ENCODE measurements at regions of chr10 and their contacts with region 1.

Region 1: DNA sequence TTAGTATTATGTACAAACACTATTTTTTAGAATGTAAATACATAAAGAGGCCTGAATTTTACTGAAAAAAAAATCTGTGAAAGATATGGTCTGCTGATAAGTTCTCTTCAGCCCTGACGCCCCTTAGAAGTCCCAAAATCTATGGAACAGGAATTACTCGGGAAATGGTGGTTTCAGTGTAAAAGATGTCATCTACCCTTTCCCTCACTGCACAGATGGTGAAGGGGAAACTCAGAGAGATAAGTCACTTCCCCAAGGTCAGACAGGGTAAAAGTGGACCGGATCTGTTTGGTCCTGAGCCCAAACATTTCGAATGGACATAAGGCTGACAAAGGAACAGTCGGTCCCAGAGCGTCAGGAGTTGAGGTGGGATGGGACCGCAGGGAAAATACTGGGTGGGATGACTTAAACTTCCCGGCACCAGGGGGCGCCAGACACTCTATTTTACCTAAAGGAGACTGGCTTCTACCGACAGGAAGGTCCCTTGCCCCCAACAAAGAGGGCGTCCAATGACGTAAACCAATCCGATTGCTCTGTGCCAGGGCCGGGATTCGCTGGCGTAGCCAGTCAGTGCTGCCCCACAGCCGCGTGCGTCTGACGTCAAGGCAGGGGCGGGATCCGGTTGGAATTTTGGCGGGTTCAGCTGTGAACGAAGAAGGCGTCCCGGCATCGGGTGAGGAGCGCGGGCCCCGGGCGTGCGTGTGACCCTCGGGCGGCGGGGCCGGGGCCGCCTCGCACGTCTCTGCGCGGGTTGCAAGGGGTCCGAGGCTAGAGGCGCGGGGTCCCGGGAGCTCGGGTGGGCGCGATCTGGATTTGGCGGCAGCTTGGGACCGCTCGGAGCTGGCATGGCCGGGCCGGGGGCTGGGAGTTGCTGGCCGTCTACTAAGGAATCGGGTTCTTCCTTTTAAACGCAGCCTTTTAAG is at the start of gene MCM10:
- DNase-seq: peak; percentile 99
- H3K4me3 ChIP-seq: peak within 1 kb of the TSS; percentile 40 to 54
- H3K27ac ChIP-seq: no peak within 1 kb of the TSS
- H3K4me1 ChIP-seq: peaks cover 9% of the 10 kb centered on the region
- H3K27me3 ChIP-seq: no peaks in the 10 kb centered on the region
- CTCF ChIP-seq: peak; percentile 92 to 97 (median 96)
- POLR2A ChIP-seq: no peak
- total RNA-seq, gene MCM10: 2.0 to 5.3 TPM

Region 2: DNA sequence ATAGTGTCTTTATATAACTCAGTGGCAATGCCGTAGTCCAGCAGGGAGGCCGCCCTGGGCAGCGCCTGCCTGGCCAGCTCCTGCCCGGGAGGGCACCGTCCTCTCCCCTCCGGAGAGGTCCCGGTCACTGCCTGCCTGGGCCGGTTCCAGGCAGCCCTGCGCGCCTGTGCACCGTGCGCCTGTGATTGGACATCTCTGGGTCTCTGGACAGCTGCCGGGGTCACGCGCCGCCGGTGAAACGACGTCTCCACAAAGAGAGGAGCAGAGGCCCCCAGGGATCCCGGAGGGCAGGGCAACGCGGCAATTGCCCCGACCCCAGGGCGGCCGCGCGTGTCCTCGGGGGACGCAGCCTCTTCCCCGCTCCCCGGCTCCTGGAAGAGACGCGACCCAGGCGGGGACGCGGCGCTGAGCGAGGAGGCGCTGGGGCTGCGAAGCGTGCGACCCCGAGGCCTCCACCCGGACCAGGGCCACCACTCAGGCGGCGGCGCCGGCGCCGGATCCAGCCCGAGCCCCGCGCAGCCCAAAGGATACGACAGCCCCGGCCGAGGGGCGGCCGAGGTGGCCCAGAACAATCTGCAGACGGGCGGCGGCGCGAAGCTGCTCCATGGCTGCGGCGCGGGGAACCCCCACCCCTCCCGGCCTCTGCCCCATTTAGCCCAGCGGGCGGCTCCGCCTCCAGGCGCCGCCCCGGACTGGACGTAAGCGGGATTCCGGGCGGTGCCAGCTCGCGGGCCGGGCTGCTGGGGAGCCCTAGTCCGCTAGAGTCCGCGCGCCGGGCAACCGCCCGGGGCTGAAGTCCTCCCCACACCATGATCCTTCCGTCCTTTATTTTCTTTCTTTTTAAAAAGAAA is 138.5 kb after region 1 on chr10 and contains the start of gene PHYH:
- intact Hi-C with region 1: loop called (anchors 10 kb)
- DNase-seq: peak; percentile 92
- H3K4me3 ChIP-seq: peak within 1 kb of the TSS; percentile 87 to 92
- H3K27ac ChIP-seq: peak within 1 kb of the TSS; percentile 97 to 99
- H3K4me1 ChIP-seq: peaks cover 9% of the 10 kb centered on the region
- H3K27me3 ChIP-seq: no peaks in the 10 kb centered on the region
- CTCF ChIP-seq: no peak
- POLR2A ChIP-seq: peak; percentile 42
- total RNA-seq, gene PHYH: 27.2 to 33.1 TPM